ENCODE measurements at regions of chr15 and their contacts with region 1.

Region 1: DNA sequence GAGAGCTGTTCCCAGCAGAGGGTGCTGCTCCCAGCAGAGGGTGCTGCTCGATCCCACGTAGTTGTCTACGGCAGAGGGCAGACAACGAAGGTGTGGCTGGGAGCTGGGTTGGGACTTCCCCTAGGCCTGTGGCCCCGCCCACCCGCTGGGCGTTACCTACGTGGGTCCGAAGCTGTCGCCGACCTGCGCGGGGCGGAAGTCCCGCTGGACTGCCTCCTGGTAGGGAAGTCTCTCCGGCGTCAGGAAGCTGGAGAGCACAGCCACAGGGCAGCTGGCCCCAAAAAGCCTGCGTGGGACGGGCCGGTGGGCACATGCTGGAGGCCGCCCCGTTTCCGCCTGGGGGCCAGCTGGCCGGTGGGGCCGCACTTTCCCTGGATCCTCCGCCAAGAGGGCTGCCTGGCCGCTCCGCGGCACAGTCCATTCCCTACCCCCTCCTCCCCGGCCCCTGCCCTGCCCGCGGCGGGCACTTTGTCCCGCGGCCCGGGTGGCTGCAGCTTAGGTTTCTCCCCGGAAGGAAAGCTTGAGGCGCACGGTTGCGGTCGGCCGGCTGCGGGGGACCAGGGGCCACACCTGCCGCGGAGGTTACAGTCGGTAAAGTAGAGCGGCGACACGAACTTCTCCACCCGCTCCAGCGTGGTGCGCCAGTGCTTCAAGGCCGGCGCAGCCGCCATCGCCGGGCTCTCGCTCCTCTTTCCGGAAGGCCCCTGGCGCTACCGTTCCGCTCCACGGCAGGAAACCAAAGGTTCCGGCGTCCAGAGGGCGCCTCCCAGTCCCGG is at the start of gene MAN2C1:
- DNase-seq: peak; percentile 97
- H3K4me3 Mint-ChIP-seq: peak within 1 kb of the TSS; percentile 91
- H3K27ac Mint-ChIP-seq: peak within 1 kb of the TSS; percentile 96
- H3K4me1 Mint-ChIP-seq: peaks cover 8% of the 10 kb centered on the region
- H3K27me3 Mint-ChIP-seq: no peaks in the 10 kb centered on the region
- CTCF ChIP-seq: peak; percentile 64
- total RNA-seq, gene MAN2C1: 163 and 165 TPM in 2 replicates

Region 2: GRCh38 chr15:75153087-75153486 is 215.0 kb before region 1 on chr15:
- CTCF ChIA-PET with region 1: no interaction called
- POLR2A ChIA-PET with region 1: no interaction called
- intact Hi-C with region 1: no loop called
- DNase-seq: peak; percentile 37
- H3K4me3 Mint-ChIP-seq: no peak overlapping the region
- H3K27ac Mint-ChIP-seq: no peak overlapping the region
- H3K4me1 Mint-ChIP-seq: peaks cover 12% of the 10 kb centered on the region
- H3K27me3 Mint-ChIP-seq: no peaks in the 10 kb centered on the region
- CTCF ChIP-seq: no peak

Region 3: DNA sequence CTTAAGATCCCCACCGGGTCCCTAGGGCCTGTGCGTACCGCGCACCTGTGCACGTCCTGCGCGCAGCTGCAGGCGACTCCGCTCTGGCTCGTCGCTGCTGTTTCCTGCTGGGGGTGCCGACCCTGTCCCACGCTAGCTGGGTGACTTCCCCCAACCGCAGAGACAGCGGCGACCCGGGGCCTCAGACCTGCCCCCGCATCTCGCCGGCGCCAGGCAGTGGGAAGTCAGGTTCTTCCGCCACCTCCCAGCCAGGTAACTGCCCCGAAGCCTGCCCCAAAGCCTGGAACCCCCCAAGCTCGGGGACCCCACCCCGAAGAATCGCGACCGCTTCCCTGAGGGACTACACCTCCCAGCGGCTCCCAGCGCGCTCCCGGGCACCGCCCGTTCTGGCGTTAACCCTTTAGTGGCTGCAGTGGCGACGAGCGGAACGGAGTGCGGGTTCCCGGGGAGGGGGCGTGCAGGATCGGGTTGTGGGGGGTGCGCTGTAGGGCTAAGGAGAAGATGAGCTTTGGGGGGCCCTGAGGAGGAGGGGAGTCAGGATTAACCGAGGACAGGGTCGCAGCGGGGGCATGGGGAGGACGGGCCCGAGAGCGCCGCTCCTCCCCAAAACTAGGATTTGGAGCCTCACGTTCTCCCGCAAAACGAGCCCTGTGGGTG is 20.8 kb before region 1 on chr15:
- CTCF ChIA-PET with region 1: interaction called, 23 read pairs
- POLR2A ChIA-PET with region 1: interaction called, 30 read pairs
- intact Hi-C with region 1: no loop called
- DNase-seq: peak; percentile 36
- H3K4me3 Mint-ChIP-seq: peak overlapping the region; percentile 86
- H3K27ac Mint-ChIP-seq: peak overlapping the region; percentile 74
- H3K4me1 Mint-ChIP-seq: peaks cover 5% of the 10 kb centered on the region
- H3K27me3 Mint-ChIP-seq: no peaks in the 10 kb centered on the region
- CTCF ChIP-seq: no peak

Region 4: GRCh38 chr15:75453703-75454470 is 85.8 kb after region 1 on chr15:
- CTCF ChIA-PET with region 1: interaction called, 5 read pairs
- POLR2A ChIA-PET with region 1: interaction called, 245 read pairs
- intact Hi-C with region 1: loop called (anchors 2 kb)
- DNase-seq: peak; percentile 100
- H3K4me3 Mint-ChIP-seq: peak overlapping the region; percentile 89
- H3K27ac Mint-ChIP-seq: peak overlapping the region; percentile 85
- H3K4me1 Mint-ChIP-seq: peaks cover 22% of the 10 kb centered on the region
- H3K27me3 Mint-ChIP-seq: no peaks in the 10 kb centered on the region
- CTCF ChIP-seq: no peak

Region 5: GRCh38 chr15:75625542-75626347 is 257.6 kb after region 1 on chr15 and contains the start of gene SNUPN:
- CTCF ChIA-PET with region 1: interaction called, 7 read pairs
- POLR2A ChIA-PET with region 1: interaction called, 19 read pairs
- intact Hi-C with region 1: loop called (anchors 5 kb)
- DNase-seq: peak; percentile 94
- H3K4me3 Mint-ChIP-seq: peak within 1 kb of the TSS; percentile 87
- H3K27ac Mint-ChIP-seq: peak within 1 kb of the TSS; percentile 95
- H3K4me1 Mint-ChIP-seq: peaks cover 15% of the 10 kb centered on the region
- H3K27me3 Mint-ChIP-seq: no peaks in the 10 kb centered on the region
- CTCF ChIP-seq: no peak
- total RNA-seq, gene SNUPN: 23.9 and 28.9 TPM in 2 replicates

Region 6: GRCh38 chr15:75661091-75661777 is 293.1 kb after region 1 on chr15:
- CTCF ChIA-PET with region 1: no interaction called
- POLR2A ChIA-PET with region 1: interaction called, 11 read pairs
- intact Hi-C with region 1: no loop called
- DNase-seq: peak; percentile 89
- H3K4me3 Mint-ChIP-seq: peak overlapping the region; percentile 40
- H3K27ac Mint-ChIP-seq: peak overlapping the region; percentile 97
- H3K4me1 Mint-ChIP-seq: peaks cover 47% of the 10 kb centered on the region
- H3K27me3 Mint-ChIP-seq: no peaks in the 10 kb centered on the region
- CTCF ChIP-seq: no peak